A673 (cell line): ENCODE measurements at regions of chr13 and their contacts with region 1.

Region 1: GRCh38 chr13:112942689-112943308 is 26.2 kb upstream of the MCF2L start:
- DNase-seq: peak; percentile 98
- H3K4me3 ChIP-seq: peak overlapping the region; percentile 50
- H3K27ac ChIP-seq: no peak overlapping the region
- H3K4me1 ChIP-seq: peaks cover 6% of the 10 kb centered on the region
- H3K27me3 ChIP-seq: peaks cover 26% of the 10 kb centered on the region
- CTCF ChIP-seq: peak; percentile 96

Region 2: DNA sequence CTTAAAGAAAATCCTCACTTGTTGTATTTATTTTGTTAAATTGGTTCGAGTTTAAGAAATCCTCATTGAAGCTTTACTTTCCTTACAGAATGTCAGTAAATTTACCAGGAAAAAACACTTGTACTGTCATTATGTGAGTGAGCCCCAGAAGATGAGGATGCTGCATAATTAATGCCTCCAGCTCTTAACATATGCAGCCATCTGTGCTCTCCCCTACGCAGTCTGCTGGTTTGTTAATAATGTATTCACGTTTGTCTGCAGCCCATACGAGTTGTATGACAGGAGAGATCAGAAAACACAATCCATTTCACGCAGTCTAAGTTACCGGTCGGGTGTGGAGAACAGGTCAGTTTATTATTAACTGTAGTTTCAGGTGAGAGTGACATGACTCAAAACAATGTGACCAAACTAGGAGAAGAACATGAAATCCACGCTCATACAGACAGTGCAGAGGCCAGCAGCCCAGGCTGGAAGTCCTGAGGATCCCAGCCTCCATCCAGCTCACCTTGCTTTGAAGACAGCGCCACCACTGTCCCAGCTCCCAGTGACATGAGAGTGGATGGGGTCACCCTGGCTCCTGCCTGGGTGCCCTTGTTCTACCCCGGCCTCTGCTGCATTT is 272.8 kb before region 1 on chr13:
- CTCF ChIA-PET with region 1: no interaction called
- POLR2A ChIA-PET with region 1: no interaction called
- intact Hi-C with region 1: no loop called
- DNase-seq: no peak
- H3K4me3 ChIP-seq: no peak overlapping the region
- H3K27ac ChIP-seq: no peak overlapping the region
- H3K4me1 ChIP-seq: no peaks in the 10 kb centered on the region
- H3K27me3 ChIP-seq: peaks cover 3% of the 10 kb centered on the region
- CTCF ChIP-seq: no peak

Region 3: GRCh38 chr13:113029487-113030258 is 86.9 kb after region 1 on chr13:
- CTCF ChIA-PET with region 1: interaction called, 5 read pairs
- POLR2A ChIA-PET with region 1: no interaction called
- intact Hi-C with region 1: loop called (anchors 1 kb)
- DNase-seq: peak; percentile 60
- H3K4me3 ChIP-seq: no peak overlapping the region
- H3K27ac ChIP-seq: no peak overlapping the region
- H3K4me1 ChIP-seq: no peaks in the 10 kb centered on the region
- H3K27me3 ChIP-seq: peaks cover 18% of the 10 kb centered on the region
- CTCF ChIP-seq: peak; percentile 95

Region 4: GRCh38 chr13:113393563-113394338 is 451.0 kb after region 1 on chr13:
- CTCF ChIA-PET with region 1: interaction called, 3 read pairs
- POLR2A ChIA-PET with region 1: no interaction called
- intact Hi-C with region 1: loop called (anchors 2 kb)
- DNase-seq: peak; percentile 88
- H3K4me3 ChIP-seq: peak overlapping the region; percentile 57
- H3K27ac ChIP-seq: peak overlapping the region; percentile 60
- H3K4me1 ChIP-seq: no peaks in the 10 kb centered on the region
- H3K27me3 ChIP-seq: no peaks in the 10 kb centered on the region
- CTCF ChIP-seq: peak; percentile 59

Region 5: GRCh38 chr13:113562085-113562749 is 619.4 kb after region 1 on chr13:
- CTCF ChIA-PET with region 1: interaction called, 3 read pairs
- POLR2A ChIA-PET with region 1: interaction called, 3 read pairs
- intact Hi-C with region 1: loop called (anchors 1 kb)
- DNase-seq: peak; percentile 90
- H3K4me3 ChIP-seq: no peak overlapping the region
- H3K27ac ChIP-seq: no peak overlapping the region
- H3K4me1 ChIP-seq: no peaks in the 10 kb centered on the region
- H3K27me3 ChIP-seq: no peaks in the 10 kb centered on the region
- CTCF ChIP-seq: peak; percentile 86

Region 6: DNA sequence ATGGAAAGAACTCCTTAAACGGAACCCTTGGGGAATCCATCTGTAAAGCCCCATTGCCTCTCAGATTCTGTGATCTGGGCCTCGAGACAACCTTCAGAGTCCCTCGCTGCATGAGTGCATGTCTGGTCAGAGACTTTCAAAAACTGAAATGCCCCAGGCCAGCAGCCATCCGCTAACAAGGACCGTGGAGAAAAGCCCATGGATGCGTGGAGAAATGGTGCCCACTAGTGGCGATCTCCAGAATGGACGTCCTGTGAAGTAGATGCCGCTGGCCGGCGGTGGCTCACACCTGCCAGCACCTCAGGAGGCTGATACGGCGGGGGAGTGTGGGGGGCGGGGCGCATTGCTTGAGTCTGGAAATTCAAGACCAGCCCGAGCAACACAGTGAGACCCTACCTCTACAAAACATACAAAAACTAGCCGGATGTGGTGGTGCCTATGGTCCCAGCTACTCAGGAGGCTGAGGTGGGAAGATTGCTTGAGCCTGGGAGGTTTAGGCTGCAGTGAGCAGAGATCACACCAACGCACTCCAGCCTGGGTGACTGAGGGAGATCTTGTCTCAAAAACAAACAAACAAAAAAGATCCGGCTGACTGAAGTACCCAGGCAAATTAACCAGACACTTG is 1284.0 kb after region 1 on chr13:
- CTCF ChIA-PET with region 1: no interaction called
- POLR2A ChIA-PET with region 1: no interaction called
- intact Hi-C with region 1: loop called (anchors 5 kb)
- DNase-seq: peak; percentile 78
- H3K4me3 ChIP-seq: no peak overlapping the region
- H3K27ac ChIP-seq: no peak overlapping the region
- H3K4me1 ChIP-seq: peaks cover 9% of the 10 kb centered on the region
- H3K27me3 ChIP-seq: no peaks in the 10 kb centered on the region
- CTCF ChIP-seq: peak; percentile 92